Heart right ventricle (tissue), 16 donors: ENCODE measurements at regions of chr3 and their contacts with region 1.

Region 1: GRCh38 chr3:108406661-108407206 is 103.7 kb downstream of the MYH15 start:
- DNase-seq: no peak
- ATAC-seq: peak in 6 of 8 donors; percentile 63 to 85 (median 75)
- H3K4me3 ChIP-seq: no peak overlapping the region
- H3K27ac ChIP-seq: no peak overlapping the region
- H3K4me1 ChIP-seq: peaks cover 0 to 7% (median 0%) of the 10 kb centered on the region in 9 donors
- H3K27me3 ChIP-seq: peaks cover 0 to 3% (median 0%) of the 10 kb centered on the region in 7 donors
- CTCF ChIP-seq: peak; percentile 31 to 70 (median 57)

Region 2: DNA sequence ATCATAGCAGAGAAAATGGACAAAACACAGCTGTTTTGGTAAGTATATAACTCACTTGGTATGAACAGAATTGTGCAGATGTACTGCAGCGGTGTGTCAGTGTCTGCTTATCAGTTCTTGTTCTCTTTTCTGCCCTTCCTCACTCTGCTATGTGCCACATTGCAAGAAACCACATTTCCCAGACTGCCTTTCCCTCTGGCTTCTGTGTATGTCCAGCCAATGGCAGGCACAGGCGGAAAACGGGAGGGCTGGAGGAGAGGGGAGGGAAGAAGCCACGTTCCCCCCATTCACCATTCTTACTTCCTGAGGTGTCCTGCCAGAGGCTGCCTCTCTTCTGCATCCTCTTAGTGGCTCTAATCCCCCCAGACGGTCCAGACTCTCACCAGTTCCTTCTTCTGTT is 94.9 kb before region 1 on chr3:
- intact Hi-C with region 1: no loop called
- DNase-seq: no peak
- ATAC-seq: no peak
- H3K4me3 ChIP-seq: no peak overlapping the region
- H3K27ac ChIP-seq: no peak overlapping the region
- H3K4me1 ChIP-seq: no peaks in the 10 kb centered on the region
- H3K27me3 ChIP-seq: peaks cover 0 to under 1% (median 0%) of the 10 kb centered on the region in 7 donors
- CTCF ChIP-seq: no peak

Region 3: DNA sequence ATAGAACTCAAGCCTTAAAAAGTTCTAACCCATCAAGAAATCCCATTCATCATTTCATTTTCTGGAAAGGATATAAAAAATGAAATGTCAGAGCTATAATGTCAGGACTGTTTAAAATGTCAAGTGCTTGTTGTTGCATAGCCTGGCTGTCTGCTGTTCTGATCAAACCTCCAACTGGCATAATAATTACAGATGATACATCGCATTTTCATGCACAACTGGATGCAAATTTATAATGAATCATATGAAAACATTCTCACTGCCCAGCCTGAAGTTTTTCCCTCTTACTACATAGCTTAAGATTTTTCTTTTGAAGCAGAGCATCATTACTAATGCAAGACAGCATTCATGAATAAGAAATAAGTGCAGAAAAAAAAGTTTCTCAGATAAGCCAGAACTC is 500.5 kb after region 1 on chr3:
- intact Hi-C with region 1: loop called in 1 of 10 experiments (anchors 5 kb)
- DNase-seq: no peak
- ATAC-seq: no peak
- H3K4me3 ChIP-seq: no peak overlapping the region
- H3K27ac ChIP-seq: no peak overlapping the region
- H3K4me1 ChIP-seq: no peaks in the 10 kb centered on the region
- H3K27me3 ChIP-seq: no peaks in the 10 kb centered on the region
- CTCF ChIP-seq: no peak